OCI-LY7 (cell line): ENCODE measurements at regions of chr11 and their contacts with region 1.

Region 1: DNA sequence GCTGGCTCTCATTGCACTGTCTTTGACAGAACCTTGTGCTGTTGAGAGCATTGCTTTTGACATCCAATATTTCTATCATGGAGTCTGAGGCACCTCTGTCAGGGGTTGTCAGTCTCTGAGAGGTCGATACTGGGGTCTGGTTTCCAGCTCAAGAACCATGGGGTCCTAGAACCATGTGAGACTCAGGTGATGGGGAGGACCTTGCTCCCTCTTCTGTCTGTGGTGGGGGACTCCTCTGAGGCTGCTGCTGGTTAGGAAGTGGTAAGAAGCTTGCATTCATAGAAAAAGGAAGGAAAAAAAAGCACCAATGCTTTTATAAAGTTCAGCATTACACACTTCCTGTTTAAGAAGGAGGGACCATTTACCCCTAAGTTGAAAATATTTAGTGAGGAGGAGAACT is 91.8 kb upstream of the CD44 start:
- DNase-seq: peak; percentile 50
- H3K4me3 ChIP-seq: no peak overlapping the region
- H3K27ac ChIP-seq: no peak overlapping the region
- H3K4me1 ChIP-seq: peaks cover 10% of the 10 kb centered on the region
- CTCF ChIP-seq: no peak

Region 2: DNA sequence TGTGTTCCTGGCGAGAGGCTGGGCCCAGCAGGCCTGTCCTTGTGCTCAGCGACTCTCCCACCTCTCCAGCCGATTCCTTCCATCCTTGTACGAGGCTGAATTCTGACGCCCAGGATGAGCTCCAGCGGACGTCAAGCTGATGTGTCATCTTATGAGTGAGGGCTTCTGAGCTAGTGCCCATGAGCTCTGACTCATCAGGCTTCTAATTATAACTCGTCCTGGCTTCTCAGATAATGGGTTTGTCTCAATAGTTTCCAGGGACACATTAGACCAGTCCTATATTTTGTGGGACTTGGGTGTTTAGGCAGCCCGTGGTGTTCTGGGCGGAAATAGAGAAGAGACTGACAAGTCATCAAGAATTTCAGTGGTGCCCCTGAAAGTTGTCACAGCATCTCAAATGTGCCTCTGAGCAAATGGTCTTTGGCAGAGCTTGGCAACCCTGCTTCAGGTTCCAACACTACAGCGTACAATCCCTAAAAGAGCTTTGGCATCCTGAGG is 16.4 kb before region 1 on chr11:
- CTCF ChIA-PET with region 1: no interaction called
- POLR2A ChIA-PET with region 1: interaction called, 11 read pairs
- intact Hi-C with region 1: no loop called
- DNase-seq: no peak
- H3K4me3 ChIP-seq: no peak overlapping the region
- H3K27ac ChIP-seq: no peak overlapping the region
- H3K4me1 ChIP-seq: peaks cover 2% of the 10 kb centered on the region
- CTCF ChIP-seq: no peak